ENCODE measurements at regions of chr1 and their contacts with region 1.

Region 1: GRCh38 chr1:209207701-209208286 is 375.7 kb upstream of the CAMK1G start:
- H3K4me3 ChIP-seq: peak overlapping the region; percentile 43
- H3K27ac ChIP-seq: no peak overlapping the region
- H3K4me1 ChIP-seq: no peaks in the 10 kb centered on the region
- CTCF ChIP-seq: peak; percentile 88

Region 2: DNA sequence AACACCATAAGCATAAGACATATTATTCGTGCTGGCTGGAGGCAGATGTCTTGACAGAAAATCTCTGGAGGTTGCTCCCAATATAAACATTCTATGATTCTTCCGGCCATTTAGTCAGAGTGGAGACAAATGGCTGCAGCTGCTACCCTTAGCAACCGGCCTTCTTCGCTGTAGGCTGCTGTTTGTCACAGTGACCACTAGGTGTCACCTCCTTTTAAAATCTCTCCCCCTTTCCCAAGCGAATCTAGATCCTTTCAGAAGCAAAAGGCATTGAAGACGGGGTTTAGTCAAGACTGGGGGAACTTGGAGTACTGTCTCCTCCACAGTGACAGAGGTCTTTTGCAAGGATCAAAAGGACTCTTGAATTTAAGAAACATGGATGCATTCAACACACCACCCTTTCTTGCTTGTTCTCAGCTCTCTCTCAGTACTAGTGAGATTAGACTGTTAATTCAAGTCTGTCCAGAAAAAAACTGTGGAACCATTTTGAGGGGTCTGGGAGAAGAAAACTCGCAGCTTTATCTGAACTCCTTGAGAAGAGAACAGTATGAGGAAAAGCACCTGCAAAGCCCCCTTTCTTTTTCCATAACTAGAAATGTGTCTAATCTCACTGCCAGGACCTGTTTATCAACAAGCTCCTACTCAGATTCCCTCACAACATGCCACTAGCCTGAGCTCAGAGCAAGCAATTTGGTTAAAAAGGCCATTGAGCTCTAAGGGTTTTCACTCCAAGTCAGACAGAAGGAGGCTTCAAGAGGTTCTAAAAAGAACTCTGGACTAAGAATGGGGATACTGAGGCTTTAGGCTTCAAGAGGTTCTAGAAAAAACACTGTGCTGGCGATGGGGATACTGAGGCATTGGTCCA is 555.3 kb before region 1 on chr1:
- CTCF ChIA-PET with region 1: interaction called, 10 read pairs
- POLR2A ChIA-PET with region 1: no interaction called
- H3K4me3 ChIP-seq: no peak overlapping the region
- H3K27ac ChIP-seq: no peak overlapping the region
- H3K4me1 ChIP-seq: no peaks in the 10 kb centered on the region
- CTCF ChIP-seq: peak; percentile 59; the same call in 1 of the 2 replicates

Region 3: DNA sequence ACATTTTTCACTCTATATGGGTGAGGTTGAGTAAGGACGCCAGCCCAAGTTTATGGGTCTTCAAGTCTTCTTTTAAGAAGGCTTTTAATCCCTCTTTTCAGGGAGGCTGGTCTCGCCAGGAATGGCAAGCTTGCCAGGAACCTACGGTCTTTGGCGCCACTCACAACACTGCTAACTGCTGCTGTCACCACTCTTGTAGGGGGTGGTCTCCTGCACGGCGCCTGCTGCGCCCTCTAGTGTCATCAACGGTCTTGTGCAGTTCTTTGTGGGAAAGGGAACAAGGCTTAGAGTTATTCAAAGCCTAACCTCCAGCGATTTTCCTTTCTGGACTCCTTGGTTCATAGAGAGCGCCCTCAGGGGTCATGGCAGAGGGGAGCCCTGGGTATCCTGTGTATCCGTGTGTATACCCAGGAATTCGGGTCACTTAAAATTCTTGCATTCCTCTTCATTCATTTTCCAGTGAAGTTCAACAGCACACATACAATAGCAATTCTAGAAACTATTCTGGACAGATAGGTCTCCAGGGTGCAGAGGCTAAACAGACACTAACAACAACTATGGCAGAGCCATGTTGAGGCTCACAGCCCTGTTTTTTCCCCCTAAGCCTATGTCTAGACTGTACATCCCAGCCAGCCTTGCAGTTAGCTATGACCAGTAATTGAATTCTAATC is 17.1 kb before region 1 on chr1:
- CTCF ChIA-PET with region 1: interaction called, 29 read pairs
- POLR2A ChIA-PET with region 1: no interaction called
- H3K4me3 ChIP-seq: no peak overlapping the region
- H3K27ac ChIP-seq: no peak overlapping the region
- H3K4me1 ChIP-seq: no peaks in the 10 kb centered on the region
- CTCF ChIP-seq: peak; percentile 64; the same call in 1 of the 2 replicates

Region 4: DNA sequence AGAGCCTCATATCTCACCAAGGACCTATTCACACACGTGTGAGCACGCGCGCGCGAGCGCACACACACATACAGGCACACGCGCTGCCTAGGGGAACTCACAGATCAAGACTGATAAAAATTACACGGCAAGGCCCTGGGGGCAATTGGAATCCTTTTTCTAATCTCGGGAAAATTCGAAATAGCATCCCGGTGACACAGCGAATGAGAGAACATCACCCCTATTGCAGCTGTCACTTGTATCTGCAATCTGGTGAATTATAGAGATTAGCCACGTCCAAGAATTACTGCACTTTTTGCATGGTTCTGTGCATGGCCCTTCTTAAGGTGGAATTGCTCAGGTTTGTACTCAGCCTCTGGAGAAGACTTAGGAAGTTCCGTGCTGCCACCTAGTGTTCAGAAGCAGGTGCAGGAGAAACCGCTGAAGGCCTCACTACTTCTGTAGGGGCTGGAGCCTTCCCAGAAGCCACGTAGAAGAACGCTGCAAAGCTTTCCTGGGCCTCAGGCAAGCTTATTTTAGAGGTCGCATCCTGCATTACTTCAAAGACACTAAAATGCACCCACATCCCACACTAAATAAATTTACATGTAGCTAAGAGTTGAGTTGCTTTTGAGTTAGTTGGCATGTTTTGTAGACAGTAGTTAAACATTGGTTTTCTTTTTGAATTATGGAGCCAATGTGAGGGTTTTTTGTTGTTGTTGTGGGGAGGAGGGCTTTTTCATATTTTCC is 146.5 kb after region 1 on chr1:
- CTCF ChIA-PET with region 1: interaction called, 15 read pairs
- POLR2A ChIA-PET with region 1: no interaction called
- H3K4me3 ChIP-seq: no peak overlapping the region
- H3K27ac ChIP-seq: no peak overlapping the region
- H3K4me1 ChIP-seq: no peaks in the 10 kb centered on the region
- CTCF ChIP-seq: peak; percentile 73; the same call in 1 of the 2 replicates

Region 5: DNA sequence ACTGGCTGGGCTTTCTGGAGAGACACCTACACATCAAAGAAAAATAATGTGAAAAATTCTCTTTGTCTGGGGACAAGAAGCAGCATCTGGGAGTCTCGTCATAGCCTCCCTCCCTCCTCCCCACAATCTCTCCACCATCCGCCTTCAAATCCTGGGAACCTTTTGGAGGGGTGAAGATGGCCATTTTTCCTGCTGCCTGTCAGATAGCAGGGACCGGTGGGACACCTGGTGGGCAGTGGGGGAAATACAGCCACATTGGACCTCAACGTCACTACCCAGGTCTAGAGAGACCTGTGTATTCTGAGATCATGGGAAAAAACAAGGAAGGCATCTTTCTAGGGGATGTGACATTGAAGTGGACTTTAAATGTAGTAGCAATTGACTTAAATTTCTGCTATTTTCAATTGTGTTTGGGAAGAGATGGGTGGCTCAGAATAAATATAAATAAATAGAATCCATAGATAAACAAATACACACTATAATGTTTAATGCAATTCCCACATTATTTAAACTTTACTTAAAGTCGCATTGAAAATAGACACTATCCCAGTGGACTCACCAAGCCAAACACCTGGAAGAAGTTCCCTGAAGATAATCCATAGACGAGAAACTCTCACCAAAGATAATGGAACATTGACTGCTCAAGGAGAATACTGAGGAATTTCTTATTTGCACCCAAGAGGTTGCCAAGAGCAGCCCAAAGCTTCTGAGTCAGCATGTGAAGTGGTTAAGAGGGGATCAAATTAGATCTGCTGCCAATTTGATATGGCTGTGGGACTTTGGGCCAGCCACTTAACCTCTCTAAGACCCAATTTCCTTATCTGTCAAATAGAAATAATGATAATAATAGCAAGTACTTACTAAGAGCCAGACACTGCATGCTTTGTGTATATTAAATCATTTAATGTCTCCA is 228.1 kb after region 1 on chr1:
- CTCF ChIA-PET with region 1: interaction called, 15 read pairs
- POLR2A ChIA-PET with region 1: no interaction called
- H3K4me3 ChIP-seq: no peak overlapping the region
- H3K27ac ChIP-seq: no peak overlapping the region
- H3K4me1 ChIP-seq: no peaks in the 10 kb centered on the region
- CTCF ChIP-seq: peak; percentile 66